ENCODE measurements at regions of chr1 and their contacts with region 1.

Region 1: GRCh38 chr1:3869751-3870301 is 12.6 kb downstream of the DFFB start:
- DNase-seq: no peak
- H3K4me3 ChIP-seq: no peak overlapping the region
- CTCF ChIP-seq: no peak

Region 2: DNA sequence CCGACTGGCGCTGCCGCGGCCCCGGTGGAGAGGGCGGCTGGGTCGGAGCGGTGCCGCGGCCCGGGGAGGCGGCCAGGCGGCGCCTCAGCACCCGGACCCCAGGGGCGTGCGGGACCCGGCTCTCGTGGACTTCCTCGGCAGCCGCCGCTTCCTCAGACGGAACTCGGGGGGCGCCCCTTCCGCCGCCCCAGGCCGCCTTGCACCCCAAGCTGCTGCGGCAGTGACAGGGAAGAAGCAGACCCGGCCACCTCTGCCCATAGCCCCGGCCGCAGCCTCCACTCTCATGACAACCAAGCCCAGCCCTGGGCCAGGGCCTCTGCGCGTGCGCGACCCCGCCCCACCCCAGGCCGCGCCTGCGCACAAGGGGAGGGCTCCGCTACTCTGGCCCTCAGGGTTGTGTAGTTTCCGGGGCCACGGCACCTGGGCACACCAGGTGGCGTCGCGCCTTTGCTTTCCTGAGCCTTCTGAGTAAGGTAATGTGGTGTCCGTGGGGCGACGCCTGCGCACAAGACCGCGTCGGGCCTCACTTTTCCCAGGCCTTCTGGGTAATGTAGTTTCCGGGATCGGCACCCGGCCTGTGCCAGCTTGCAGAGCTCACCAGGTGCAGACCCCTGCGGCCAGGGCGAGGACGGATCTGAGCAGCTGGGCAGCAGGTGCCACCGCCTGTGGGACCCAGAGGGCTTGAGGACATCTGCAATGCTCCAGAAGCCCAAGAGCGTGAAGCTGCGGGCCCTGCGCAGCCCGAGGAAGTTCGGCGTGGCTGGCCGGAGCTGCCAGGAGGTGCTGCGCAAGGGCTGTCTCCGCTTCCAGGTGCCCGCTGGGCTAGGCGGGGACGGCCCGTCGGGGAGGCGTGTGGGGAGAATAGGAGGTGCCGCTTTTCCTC is 12.7 kb before region 1 on chr1 and contains the starts of genes CEP104 and DFFB:
- CTCF ChIA-PET with region 1: interaction called, 15 read pairs
- POLR2A ChIA-PET with region 1: no interaction called
- DNase-seq: peak; percentile 9
- H3K4me3 ChIP-seq: peak within 1 kb of the TSS; percentile 98
- CTCF ChIP-seq: no peak

Region 3: DNA sequence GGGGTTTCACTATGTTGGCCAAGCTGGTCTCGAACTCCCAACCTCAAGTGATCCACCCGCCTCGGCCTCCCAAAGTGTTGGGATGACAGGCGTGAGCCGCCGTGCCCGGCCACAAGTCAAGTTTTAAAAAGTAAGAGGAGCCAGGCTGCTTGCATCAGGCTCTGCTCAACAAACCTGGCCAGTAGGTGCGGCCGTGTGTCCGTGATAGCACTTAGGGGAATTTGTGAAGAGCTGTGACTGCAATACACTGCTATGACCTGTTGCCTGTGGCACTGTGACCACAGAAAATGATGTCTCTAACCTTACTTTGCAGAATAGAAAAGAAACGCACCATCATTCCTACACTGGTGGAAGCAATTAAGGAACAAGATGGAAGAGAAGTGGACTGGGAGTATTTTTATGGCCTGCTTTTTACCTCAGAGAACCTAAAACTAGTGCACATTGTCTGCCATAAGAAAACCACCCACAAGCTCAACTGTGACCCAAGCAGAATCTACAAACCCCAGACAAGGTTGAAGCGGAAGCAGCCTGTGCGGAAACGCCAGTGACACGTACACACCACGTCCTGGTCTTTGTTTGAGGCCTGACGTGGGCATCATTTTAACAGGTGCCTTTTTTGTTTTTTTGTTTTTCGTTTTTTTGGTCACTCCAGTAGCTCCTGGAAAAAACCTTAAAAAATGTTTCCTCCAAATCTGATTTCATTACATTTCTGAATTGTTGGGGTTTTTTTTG is 13.5 kb after region 1 on chr1:
- CTCF ChIA-PET with region 1: no interaction called
- POLR2A ChIA-PET with region 1: no interaction called
- DNase-seq: no peak
- H3K4me3 ChIP-seq: no peak overlapping the region
- CTCF ChIP-seq: no peak